CD8-positive, alpha-beta T cell (primary cell): ENCODE measurements at regions of chr17 and their contacts with region 1.

Region 1: GRCh38 chr17:64399071-64399766 is 8.6 kb upstream of the PECAM1 start:
- DNase-seq: peak in 2 of 9 experiments; percentile 26 to 30
- ATAC-seq: no peak
- H3K4me3 ChIP-seq: no peak overlapping the region
- H3K4me3 Mint-ChIP-seq: peak overlapping the region; percentile 42
- H3K27ac ChIP-seq: peak overlapping the region in 1 of 2 experiments; percentile 40
- H3K27ac Mint-ChIP-seq: peak overlapping the region; percentile 64
- H3K4me1 ChIP-seq: peaks cover 57% of the 10 kb centered on the region
- H3K4me1 Mint-ChIP-seq: peaks cover 50% of the 10 kb centered on the region
- H3K27me3 ChIP-seq: no peaks in the 10 kb centered on the region
- H3K27me3 Mint-ChIP-seq: no peaks in the 10 kb centered on the region
- CTCF ChIP-seq: no peak

Region 2: DNA sequence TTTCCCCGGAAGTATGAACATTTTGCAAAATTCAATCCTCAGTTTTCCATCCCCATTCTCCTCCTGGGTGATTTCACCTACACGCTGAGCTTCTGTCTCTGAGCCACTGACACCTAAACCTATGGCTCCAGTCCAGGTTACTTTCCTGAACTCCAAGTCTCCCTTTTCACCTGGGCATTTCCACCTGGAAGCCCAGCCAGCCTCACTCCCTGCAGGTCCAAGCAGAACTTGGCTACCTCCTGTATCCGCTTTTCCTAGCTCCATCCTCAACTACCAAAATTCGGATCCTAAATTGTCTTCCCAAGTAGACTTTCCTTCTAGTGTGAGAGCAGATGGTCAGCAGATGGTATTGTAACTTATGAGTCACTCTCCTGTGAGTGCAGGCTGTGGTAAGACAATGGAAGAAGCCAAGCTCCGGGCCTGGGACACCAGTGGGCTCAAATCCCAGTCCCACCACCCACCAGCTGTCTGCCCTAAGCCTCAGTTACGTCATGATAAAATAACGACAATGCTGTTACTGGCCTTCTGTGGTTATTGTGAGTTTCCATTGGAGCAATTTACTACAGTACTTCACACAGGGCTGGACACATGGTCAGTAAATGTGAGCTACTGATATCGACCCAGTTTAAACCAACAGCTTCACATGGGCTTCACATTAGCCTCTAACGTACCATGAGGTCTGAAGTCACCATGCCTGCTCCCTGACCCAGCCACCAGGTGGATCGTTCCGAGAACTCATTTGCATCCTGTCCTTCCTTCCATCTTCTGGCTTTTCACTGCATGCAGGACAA is 41.8 kb before region 1 on chr17:
- CTCF ChIA-PET with region 1: no interaction called
- POLR2A ChIA-PET with region 1: interaction called, 10 read pairs
- intact Hi-C with region 1: no loop called
- DNase-seq: no peak
- ATAC-seq: no peak
- H3K4me3 ChIP-seq: no peak overlapping the region
- H3K4me3 Mint-ChIP-seq: no peak overlapping the region
- H3K27ac ChIP-seq: no peak overlapping the region
- H3K27ac Mint-ChIP-seq: peak overlapping the region; percentile 77
- H3K4me1 ChIP-seq: peaks cover 8% of the 10 kb centered on the region
- H3K4me1 Mint-ChIP-seq: peaks cover 21% of the 10 kb centered on the region
- H3K27me3 ChIP-seq: no peaks in the 10 kb centered on the region
- H3K27me3 Mint-ChIP-seq: no peaks in the 10 kb centered on the region
- CTCF ChIP-seq: no peak

Region 3: DNA sequence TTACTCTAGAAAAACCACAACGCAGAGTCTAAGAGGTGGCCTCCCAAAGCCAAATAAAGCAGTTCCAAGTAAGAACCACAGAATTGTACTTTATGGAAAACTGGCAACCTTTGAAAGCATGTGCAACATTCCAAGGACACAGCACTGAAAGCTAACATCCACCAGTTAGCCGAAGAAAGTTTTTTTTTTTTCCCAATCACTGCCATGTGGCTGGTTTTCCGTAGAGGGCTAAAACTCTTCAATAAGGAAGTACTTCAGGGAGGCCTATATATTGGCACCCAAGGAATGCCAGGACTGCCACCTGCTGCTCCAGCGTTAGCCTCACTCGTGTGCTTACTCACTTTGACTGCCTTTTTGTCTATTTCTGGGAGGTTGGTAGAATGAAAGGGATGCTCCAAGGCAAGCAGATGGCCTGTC is 132.7 kb after region 1 on chr17:
- CTCF ChIA-PET with region 1: no interaction called
- POLR2A ChIA-PET with region 1: no interaction called
- intact Hi-C with region 1: no loop called
- DNase-seq: no peak
- ATAC-seq: no peak
- H3K4me3 ChIP-seq: no peak overlapping the region
- H3K4me3 Mint-ChIP-seq: no peak overlapping the region
- H3K27ac ChIP-seq: no peak overlapping the region
- H3K27ac Mint-ChIP-seq: no peak overlapping the region
- H3K4me1 ChIP-seq: no peaks in the 10 kb centered on the region
- H3K4me1 Mint-ChIP-seq: no peaks in the 10 kb centered on the region
- H3K27me3 ChIP-seq: no peaks in the 10 kb centered on the region
- H3K27me3 Mint-ChIP-seq: no peaks in the 10 kb centered on the region
- CTCF ChIP-seq: no peak